Psoas muscle (tissue), 8 donors: ENCODE measurements at regions of chr7 and their contacts with region 1.

Region 1: GRCh38 chr7:101169838-101170551 is 4.6 kb upstream of the VGF start:
- DNase-seq: peak; percentile 72 to 80
- ATAC-seq: peak in 3 of 4 donors; percentile 50 to 67 (median 65)
- H3K4me3 ChIP-seq: no peak overlapping the region
- H3K27ac ChIP-seq: no peak overlapping the region
- H3K4me1 ChIP-seq: peaks cover 17% of the 10 kb centered on the region
- H3K27me3 ChIP-seq: peaks cover 0 to 98% (median 61%) of the 10 kb centered on the region in 3 donors
- CTCF ChIP-seq: peak; percentile 69

Region 2: DNA sequence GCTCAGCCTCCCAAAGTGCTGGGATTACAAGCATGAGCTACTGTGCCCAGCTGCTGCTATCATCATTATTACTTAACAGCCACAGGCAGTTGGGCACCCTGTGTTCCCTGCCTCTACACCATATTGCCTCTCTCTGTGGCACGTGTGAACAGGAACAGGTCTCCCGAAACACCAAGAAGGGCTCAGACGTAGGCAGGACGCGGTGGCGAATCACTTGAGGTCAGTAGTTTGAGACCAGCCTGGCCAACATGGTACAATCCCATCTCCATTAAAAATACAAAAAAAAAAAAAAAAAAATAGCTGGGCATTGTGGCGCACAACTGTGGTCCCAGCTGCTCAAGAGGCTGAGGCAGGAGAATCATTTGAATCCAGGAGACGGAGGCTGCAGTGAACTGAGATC is 27.0 kb before region 1 on chr7:
- intact Hi-C with region 1: loop called in 1 of 2 experiments (anchors 2 kb)
- DNase-seq: no peak
- ATAC-seq: no peak
- H3K4me3 ChIP-seq: no peak overlapping the region
- H3K27ac ChIP-seq: no peak overlapping the region
- H3K4me1 ChIP-seq: peaks cover 9% of the 10 kb centered on the region
- H3K27me3 ChIP-seq: peaks cover 0 to 17% (median 2%) of the 10 kb centered on the region in 3 donors
- CTCF ChIP-seq: no peak